ENCODE measurements at regions of chr6 and their contacts with region 1.

Region 1: GRCh38 chr6:109382576-109383437 is 540 bp upstream of the CD164 start:
- DNase-seq: peak; percentile 98
- H3K4me3 ChIP-seq: peak overlapping the region; percentile 67 to 100 (median 84)
- H3K27ac ChIP-seq: peak overlapping the region; percentile 98 to 100 (median 99)
- H3K4me1 ChIP-seq: peaks cover 31 to 55% (median 50%) of the 10 kb centered on the region in 4 donors
- H3K27me3 ChIP-seq: no peaks in the 10 kb centered on the region
- CTCF ChIP-seq: peak; percentile 46 to 61 (median 56)
- EP300 ChIP-seq: no peak
- POLR2A ChIP-seq: peak; percentile 8

Region 2: DNA sequence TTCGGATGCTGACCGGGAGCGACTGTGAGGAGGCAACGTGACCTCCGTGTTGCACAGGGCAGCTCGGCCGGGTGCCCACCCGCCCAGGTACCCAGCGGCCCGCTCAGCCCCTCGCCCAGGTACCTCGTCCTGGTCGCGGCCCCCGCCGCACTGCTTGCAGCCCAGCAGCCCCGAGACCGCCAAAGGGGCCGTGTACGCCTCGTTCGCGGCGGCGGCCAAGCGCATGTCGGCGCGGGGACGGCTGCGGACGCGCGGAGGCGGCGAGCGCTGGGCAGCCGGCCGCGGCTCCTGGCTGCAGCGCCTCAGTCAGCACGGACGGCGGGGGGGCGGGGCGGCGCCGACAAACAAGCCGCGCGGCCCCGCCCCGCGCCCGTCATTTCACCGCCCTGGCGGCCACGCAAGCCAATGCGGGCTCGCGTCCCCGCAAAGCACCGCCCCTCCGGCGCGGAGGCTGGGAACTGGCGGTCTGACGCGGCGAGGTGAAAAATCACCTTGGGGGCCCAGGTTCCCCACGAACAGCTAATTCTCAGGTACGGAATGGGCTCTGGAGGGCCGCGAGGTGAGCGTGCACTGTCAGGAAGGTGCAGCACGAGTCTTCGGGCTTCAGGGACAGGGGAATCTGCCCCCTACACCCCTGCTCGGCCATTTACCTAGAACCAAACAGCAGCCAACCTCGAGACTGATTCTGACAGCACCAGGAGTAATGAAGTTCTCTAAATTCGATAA is 373.4 kb before region 1 on chr6:
- intact Hi-C with region 1: loop called (anchors 10 kb)
- DNase-seq: peak; percentile 96
- H3K4me3 ChIP-seq: peak overlapping the region; percentile 88 to 95 (median 92)
- H3K27ac ChIP-seq: peak overlapping the region; percentile 97
- H3K4me1 ChIP-seq: peaks cover 26 to 68% (median 48%) of the 10 kb centered on the region in 4 donors
- H3K27me3 ChIP-seq: no peaks in the 10 kb centered on the region
- CTCF ChIP-seq: peak in 2 of 3 experiments; percentile 21 to 43
- EP300 ChIP-seq: no peak
- POLR2A ChIP-seq: peak; percentile 40

Region 3: GRCh38 chr6:109095027-109095834 is 287.6 kb before region 1 on chr6 and contains the start of gene CEP57L1:
- intact Hi-C with region 1: loop called (anchors 10 kb)
- DNase-seq: peak; percentile 98
- H3K4me3 ChIP-seq: peak within 1 kb of the TSS; percentile 75 to 86 (median 80)
- H3K27ac ChIP-seq: peak within 1 kb of the TSS; percentile 98 to 99 (median 98)
- H3K4me1 ChIP-seq: peaks cover 21 to 37% (median 33%) of the 10 kb centered on the region in 4 donors
- H3K27me3 ChIP-seq: no peaks in the 10 kb centered on the region
- CTCF ChIP-seq: peak in 1 of 3 experiments; percentile 24
- EP300 ChIP-seq: no peak
- POLR2A ChIP-seq: peak; percentile 46
- total RNA-seq, gene CEP57L1: 11.9 to 19.9 (median 13.9) TPM

Region 4: GRCh38 chr6:109187399-109188114 is 195.2 kb before region 1 on chr6:
- intact Hi-C with region 1: loop called (anchors 5 kb)
- DNase-seq: no peak
- H3K4me3 ChIP-seq: no peak overlapping the region
- H3K27ac ChIP-seq: no peak overlapping the region
- H3K4me1 ChIP-seq: peaks cover 0 to 10% (median 5%) of the 10 kb centered on the region in 4 donors
- H3K27me3 ChIP-seq: no peaks in the 10 kb centered on the region
- CTCF ChIP-seq: peak; percentile 88 to 95 (median 94)
- EP300 ChIP-seq: no peak
- POLR2A ChIP-seq: no peak

Region 5: GRCh38 chr6:109304284-109305015 is 78.4 kb before region 1 on chr6:
- intact Hi-C with region 1: loop called (anchors 5 kb)
- DNase-seq: no peak
- H3K4me3 ChIP-seq: no peak overlapping the region
- H3K27ac ChIP-seq: peak overlapping the region; percentile 68 to 85 (median 82)
- H3K4me1 ChIP-seq: peaks cover 47 to 63% (median 52%) of the 10 kb centered on the region in 4 donors
- H3K27me3 ChIP-seq: no peaks in the 10 kb centered on the region
- CTCF ChIP-seq: no peak
- EP300 ChIP-seq: no peak
- POLR2A ChIP-seq: no peak

Region 6: GRCh38 chr6:109440331-109441068 is 57.7 kb after region 1 on chr6 and contains the starts of genes PPIL6 and SMPD2:
- intact Hi-C with region 1: loop called (anchors 2 kb)
- DNase-seq: peak; percentile 95
- H3K4me3 ChIP-seq: peak within 1 kb of the TSS; percentile 76 to 94 (median 86)
- H3K27ac ChIP-seq: peak within 1 kb of the TSS; percentile 82 to 89 (median 86)
- H3K4me1 ChIP-seq: peaks cover 18 to 33% (median 28%) of the 10 kb centered on the region in 4 donors
- H3K27me3 ChIP-seq: no peaks in the 10 kb centered on the region
- CTCF ChIP-seq: peak; percentile 16 to 26 (median 21)
- EP300 ChIP-seq: no peak
- POLR2A ChIP-seq: no peak
- total RNA-seq, gene PPIL6: 2.2 to 9.2 (median 5.5) TPM
- total RNA-seq, gene SMPD2: 4.6 to 7.6 (median 6.4) TPM

Region 7: GRCh38 chr6:109455502-109456282 is 72.9 kb after region 1 on chr6 and contains the start of gene MICAL1:
- intact Hi-C with region 1: no loop called
- DNase-seq: no peak
- H3K4me3 ChIP-seq: peak within 1 kb of the TSS; percentile 65 to 90 (median 80)
- H3K27ac ChIP-seq: peak within 1 kb of the TSS; percentile 64 to 80 (median 76)
- H3K4me1 ChIP-seq: peaks cover 20 to 33% (median 31%) of the 10 kb centered on the region in 4 donors
- H3K27me3 ChIP-seq: no peaks in the 10 kb centered on the region
- CTCF ChIP-seq: peak in 1 of 3 experiments; percentile 45
- EP300 ChIP-seq: no peak
- POLR2A ChIP-seq: no peak
- total RNA-seq, gene MICAL1: 20.0 to 27.1 (median 23.5) TPM

Region 8: GRCh38 chr6:109482905-109483735 is 100.3 kb after region 1 on chr6 and contains the start of gene ZBTB24:
- intact Hi-C with region 1: loop called (anchors 5 kb)
- DNase-seq: peak; percentile 96
- H3K4me3 ChIP-seq: peak within 1 kb of the TSS; percentile 71 to 98 (median 92)
- H3K27ac ChIP-seq: peak within 1 kb of the TSS; percentile 81 to 89 (median 86)
- H3K4me1 ChIP-seq: peaks cover 36 to 53% (median 51%) of the 10 kb centered on the region in 4 donors
- H3K27me3 ChIP-seq: no peaks in the 10 kb centered on the region
- CTCF ChIP-seq: peak in 1 of 3 experiments; percentile 7
- EP300 ChIP-seq: no peak
- POLR2A ChIP-seq: peak; percentile 62
- total RNA-seq, gene ZBTB24: 5.3 to 6.4 (median 5.9) TPM

Measured in esophagus muscularis mucosa (tissue), 4 donors.